ENCODE measurements at regions of chr15 and their contacts with region 1.

Region 1: GRCh38 chr15:100572362-100572983 is 29.5 kb downstream of the LINS1 start:
- DNase-seq: peak in 1 of 4 donors; percentile 16
- ATAC-seq: peak; percentile 49
- H3K4me3 ChIP-seq: no peak overlapping the region
- H3K27ac ChIP-seq: peak overlapping the region in 1 of 2 donors; percentile 60
- H3K4me1 ChIP-seq: peaks cover 0 to 17% of the 10 kb centered on the region in 2 donors
- H3K27me3 ChIP-seq: no peaks in the 10 kb centered on the region
- CTCF ChIP-seq: peak; percentile 37 to 48

Region 2: GRCh38 chr15:100349696-100350433 is 222.6 kb before region 1 on chr15:
- intact Hi-C with region 1: loop called in 1 of 2 experiments (anchors 5 kb)
- DNase-seq: peak; percentile 92 to 97 (median 94)
- ATAC-seq: peak; percentile 99
- H3K4me3 ChIP-seq: peak overlapping the region; percentile 62 to 68
- H3K27ac ChIP-seq: peak overlapping the region; percentile 91 to 92
- H3K4me1 ChIP-seq: peaks cover 0 to 21% of the 10 kb centered on the region in 2 donors
- H3K27me3 ChIP-seq: peaks cover 0 to 9% of the 10 kb centered on the region in 2 donors
- CTCF ChIP-seq: peak; percentile 82 to 90

Region 3: GRCh38 chr15:100429116-100429728 is 143.3 kb before region 1 on chr15:
- intact Hi-C with region 1: no loop called
- DNase-seq: no peak
- ATAC-seq: no peak
- H3K4me3 ChIP-seq: no peak overlapping the region
- H3K27ac ChIP-seq: no peak overlapping the region
- H3K4me1 ChIP-seq: no peaks in the 10 kb centered on the region
- H3K27me3 ChIP-seq: no peaks in the 10 kb centered on the region
- CTCF ChIP-seq: no peak

Region 4: DNA sequence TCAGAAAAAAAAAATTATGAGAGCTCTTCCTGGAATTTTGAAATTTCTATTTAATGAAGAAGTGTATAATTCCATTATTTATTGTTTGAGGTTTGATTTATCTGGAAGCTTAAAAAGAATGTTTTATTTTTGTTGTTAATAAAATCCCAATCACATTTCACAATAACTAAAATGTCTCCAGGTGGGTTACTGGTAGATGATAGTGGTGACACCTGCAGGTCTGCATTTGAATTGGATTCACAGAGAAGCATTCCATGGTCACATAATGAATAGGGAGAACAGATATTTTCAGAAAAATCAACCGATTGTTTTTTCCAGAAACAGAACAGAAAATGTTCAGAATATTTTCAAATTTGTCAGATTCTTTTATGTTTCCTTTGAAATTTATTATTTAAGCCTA is 78.2 kb after region 1 on chr15:
- intact Hi-C with region 1: no loop called
- DNase-seq: no peak
- ATAC-seq: no peak
- H3K4me3 ChIP-seq: no peak overlapping the region
- H3K27ac ChIP-seq: no peak overlapping the region
- H3K4me1 ChIP-seq: peaks cover 0 to 1% of the 10 kb centered on the region in 2 donors
- H3K27me3 ChIP-seq: no peaks in the 10 kb centered on the region
- CTCF ChIP-seq: no peak

Measured in left lung (tissue), 14 donors.